CD4-positive, alpha-beta memory T cell (primary cell): ENCODE measurements at regions of chr9 and their contacts with region 1.

Region 1: GRCh38 chr9:5529683-5530221 is 19.4 kb downstream of the PDCD1LG2 start:
- DNase-seq: no peak
- H3K4me3 ChIP-seq: no peak overlapping the region
- H3K4me3 Mint-ChIP-seq: peak overlapping the region in 1 of 8 donors; percentile 2
- H3K27ac ChIP-seq: no peak overlapping the region
- H3K27ac Mint-ChIP-seq: peak overlapping the region in 5 of 7 donors; percentile 36 to 86 (median 67)
- H3K4me1 ChIP-seq: peaks cover 37% of the 10 kb centered on the region
- H3K4me1 Mint-ChIP-seq: peaks cover 37 to 47% (median 42%) of the 10 kb centered on the region in 4 donors
- H3K27me3 ChIP-seq: no peaks in the 10 kb centered on the region
- H3K27me3 Mint-ChIP-seq: no peaks in the 10 kb centered on the region

Region 2: GRCh38 chr9:5408596-5408995 is 121.2 kb before region 1 on chr9:
- CTCF ChIA-PET with region 1: no interaction called
- POLR2A ChIA-PET with region 1: no interaction called
- intact Hi-C with region 1: no loop called
- DNase-seq: no peak
- H3K4me3 ChIP-seq: no peak overlapping the region
- H3K4me3 Mint-ChIP-seq: no peak overlapping the region
- H3K27ac ChIP-seq: no peak overlapping the region
- H3K27ac Mint-ChIP-seq: no peak overlapping the region
- H3K4me1 ChIP-seq: no peaks in the 10 kb centered on the region
- H3K4me1 Mint-ChIP-seq: peaks cover 4 to 20% (median 13%) of the 10 kb centered on the region in 4 donors
- H3K27me3 ChIP-seq: no peaks in the 10 kb centered on the region
- H3K27me3 Mint-ChIP-seq: no peaks in the 10 kb centered on the region

Region 3: GRCh38 chr9:5557606-5558587 is 28.1 kb after region 1 on chr9:
- CTCF ChIA-PET with region 1: interaction called, 4 read pairs
- POLR2A ChIA-PET with region 1: interaction called, 27 read pairs
- intact Hi-C with region 1: no loop called
- DNase-seq: peak; percentile 61 to 79 (median 68)
- H3K4me3 ChIP-seq: peak overlapping the region in 1 of 2 donors; percentile 14
- H3K4me3 Mint-ChIP-seq: peak overlapping the region in 7 of 8 donors; percentile 26 to 85 (median 68)
- H3K27ac ChIP-seq: peak overlapping the region; percentile 56
- H3K27ac Mint-ChIP-seq: peak overlapping the region; percentile 85 to 99 (median 95)
- H3K4me1 ChIP-seq: peaks cover 42% of the 10 kb centered on the region
- H3K4me1 Mint-ChIP-seq: peaks cover 36 to 70% (median 59%) of the 10 kb centered on the region in 4 donors
- H3K27me3 ChIP-seq: no peaks in the 10 kb centered on the region
- H3K27me3 Mint-ChIP-seq: no peaks in the 10 kb centered on the region

Region 4: DNA sequence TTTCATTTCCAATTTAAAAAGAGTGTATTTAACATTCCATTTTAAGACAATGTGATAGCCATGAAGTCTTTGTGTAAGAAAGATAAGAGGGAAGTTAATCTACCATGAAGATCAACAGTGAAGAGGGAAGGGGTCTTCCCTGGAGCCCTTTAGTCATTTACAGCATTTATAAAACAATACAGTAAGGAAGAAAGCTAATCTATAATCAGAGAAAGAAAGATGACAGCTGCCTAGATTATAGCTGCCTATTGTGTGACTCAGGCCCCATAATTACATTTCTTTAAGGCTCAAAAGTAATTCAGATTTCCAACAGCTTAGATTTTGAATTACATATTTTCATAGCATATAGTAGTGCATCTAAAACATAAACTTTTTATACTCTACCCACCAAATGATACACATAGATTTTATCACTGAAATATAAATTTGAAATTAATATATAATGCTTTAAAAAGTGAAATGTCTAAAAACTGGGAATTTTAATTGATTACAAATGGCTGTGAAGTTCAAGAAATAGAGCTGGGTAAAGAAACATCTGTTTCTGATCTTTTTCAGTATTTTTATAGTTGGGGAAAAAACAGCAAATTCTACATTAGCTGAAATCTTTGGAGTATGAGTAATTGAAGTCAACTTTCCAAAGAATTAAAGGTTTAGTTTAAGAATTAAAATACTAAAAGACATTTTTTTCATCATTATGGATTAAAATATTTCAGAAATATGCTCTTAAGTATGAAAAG is 188.7 kb after region 1 on chr9:
- CTCF ChIA-PET with region 1: no interaction called
- POLR2A ChIA-PET with region 1: no interaction called
- intact Hi-C with region 1: no loop called
- DNase-seq: no peak
- H3K4me3 ChIP-seq: no peak overlapping the region
- H3K4me3 Mint-ChIP-seq: no peak overlapping the region
- H3K27ac ChIP-seq: no peak overlapping the region
- H3K27ac Mint-ChIP-seq: peak overlapping the region in 1 of 7 donors; percentile 23
- H3K4me1 ChIP-seq: no peaks in the 10 kb centered on the region
- H3K4me1 Mint-ChIP-seq: peaks cover 0 to 8% (median 7%) of the 10 kb centered on the region in 4 donors
- H3K27me3 ChIP-seq: no peaks in the 10 kb centered on the region
- H3K27me3 Mint-ChIP-seq: no peaks in the 10 kb centered on the region

Region 5: DNA sequence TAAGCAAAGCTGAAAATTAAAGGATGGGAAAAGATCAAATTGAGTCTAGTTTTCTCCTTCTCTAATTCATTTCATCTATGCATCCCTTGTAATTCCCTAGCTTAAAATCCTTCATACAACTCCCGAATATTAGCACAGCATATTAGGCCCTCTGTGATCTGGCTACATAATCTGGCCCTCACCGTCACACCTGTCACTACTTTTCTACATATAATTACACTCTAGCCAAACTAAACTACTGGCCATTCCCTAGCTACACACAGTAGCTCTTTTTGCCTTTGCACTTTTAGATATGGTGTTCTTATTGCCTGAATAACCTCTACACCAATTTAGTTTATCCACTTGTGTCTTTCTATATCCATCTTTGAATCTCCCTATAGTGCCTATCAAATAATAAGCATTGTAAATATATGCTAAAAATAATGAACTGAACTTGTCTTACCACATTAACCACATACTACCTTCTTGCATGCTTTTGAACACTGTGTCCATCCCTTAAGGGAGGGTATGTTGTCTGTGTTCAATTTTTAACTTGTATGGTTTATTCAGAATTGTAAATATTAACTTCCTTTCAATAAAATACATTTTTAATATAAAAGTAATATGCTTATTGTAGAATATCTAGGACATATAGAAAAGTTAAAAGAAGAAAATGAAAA is 469.8 kb after region 1 on chr9:
- CTCF ChIA-PET with region 1: no interaction called
- POLR2A ChIA-PET with region 1: no interaction called
- intact Hi-C with region 1: no loop called
- DNase-seq: no peak
- H3K4me3 ChIP-seq: no peak overlapping the region
- H3K4me3 Mint-ChIP-seq: peak overlapping the region in 1 of 8 donors; percentile 51
- H3K27ac ChIP-seq: no peak overlapping the region
- H3K27ac Mint-ChIP-seq: no peak overlapping the region
- H3K4me1 ChIP-seq: peaks cover 58% of the 10 kb centered on the region
- H3K4me1 Mint-ChIP-seq: peaks cover 45 to 70% (median 60%) of the 10 kb centered on the region in 4 donors
- H3K27me3 ChIP-seq: no peaks in the 10 kb centered on the region
- H3K27me3 Mint-ChIP-seq: no peaks in the 10 kb centered on the region

Region 6: GRCh38 chr9:6230037-6230760 is 700.4 kb after region 1 on chr9:
- CTCF ChIA-PET with region 1: no interaction called
- POLR2A ChIA-PET with region 1: no interaction called
- intact Hi-C with region 1: no loop called
- DNase-seq: no peak
- H3K4me3 ChIP-seq: no peak overlapping the region
- H3K4me3 Mint-ChIP-seq: no peak overlapping the region
- H3K27ac ChIP-seq: no peak overlapping the region
- H3K27ac Mint-ChIP-seq: no peak overlapping the region
- H3K4me1 ChIP-seq: no peaks in the 10 kb centered on the region
- H3K4me1 Mint-ChIP-seq: no peaks in the 10 kb centered on the region
- H3K27me3 ChIP-seq: no peaks in the 10 kb centered on the region
- H3K27me3 Mint-ChIP-seq: peaks cover 3 to 6% of the 10 kb centered on the region in 2 donors